Right cardiac atrium (tissue), 5 donors: ENCODE measurements at regions of chr14 and their contacts with region 1.

Region 1: GRCh38 chr14:104563742-104564615 is 15.6 kb upstream of the C14orf180 start:
- DNase-seq: peak; percentile 78 to 91 (median 90)
- ATAC-seq: peak; percentile 75 to 84
- H3K4me3 ChIP-seq: no peak overlapping the region
- H3K27ac ChIP-seq: no peak overlapping the region
- H3K4me1 ChIP-seq: no peaks in the 10 kb centered on the region
- H3K27me3 ChIP-seq: no peaks in the 10 kb centered on the region

Region 2: DNA sequence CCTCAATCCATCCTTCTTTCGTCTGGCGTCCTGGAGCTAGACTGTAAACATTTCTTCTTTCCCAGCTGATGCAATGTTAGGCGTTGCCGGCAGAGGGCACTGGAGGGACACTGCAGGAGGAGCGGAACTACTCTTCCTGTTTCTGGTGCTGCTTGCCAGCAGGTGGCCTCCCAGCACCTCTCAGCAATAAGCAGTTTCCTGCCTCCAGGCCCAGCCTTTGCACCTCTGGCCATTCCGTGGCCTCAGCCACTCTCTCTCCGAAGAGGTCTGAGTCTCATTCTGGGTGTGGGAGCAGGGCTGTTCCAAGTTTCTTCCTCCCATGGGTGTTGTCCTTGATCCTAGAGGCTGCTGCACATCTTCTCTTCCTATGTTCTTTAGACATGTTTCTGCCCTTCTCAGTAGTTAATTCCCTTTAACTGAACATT is 485.9 kb before region 1 on chr14:
- intact Hi-C with region 1: loop called in 3 of 4 experiments (anchors 10 kb)
- DNase-seq: peak; percentile 84 to 92 (median 92)
- ATAC-seq: peak; percentile 86 to 89
- H3K4me3 ChIP-seq: no peak overlapping the region
- H3K27ac ChIP-seq: no peak overlapping the region
- H3K4me1 ChIP-seq: no peaks in the 10 kb centered on the region
- H3K27me3 ChIP-seq: no peaks in the 10 kb centered on the region

Region 3: GRCh38 chr14:104085030-104085888 is 478.7 kb before region 1 on chr14 and contains the start of gene ASPG:
- intact Hi-C with region 1: loop called in 1 of 4 experiments (anchors 10 kb)
- DNase-seq: peak; percentile 75 to 87 (median 84)
- ATAC-seq: peak; percentile 44 to 50
- H3K4me3 ChIP-seq: peak within 1 kb of the TSS; percentile 36
- H3K27ac ChIP-seq: peak within 1 kb of the TSS; percentile 78
- H3K4me1 ChIP-seq: peaks cover 5% of the 10 kb centered on the region
- H3K27me3 ChIP-seq: no peaks in the 10 kb centered on the region
- total RNA-seq, gene ASPG: 169 to 307 (median 208) TPM

Region 4: DNA sequence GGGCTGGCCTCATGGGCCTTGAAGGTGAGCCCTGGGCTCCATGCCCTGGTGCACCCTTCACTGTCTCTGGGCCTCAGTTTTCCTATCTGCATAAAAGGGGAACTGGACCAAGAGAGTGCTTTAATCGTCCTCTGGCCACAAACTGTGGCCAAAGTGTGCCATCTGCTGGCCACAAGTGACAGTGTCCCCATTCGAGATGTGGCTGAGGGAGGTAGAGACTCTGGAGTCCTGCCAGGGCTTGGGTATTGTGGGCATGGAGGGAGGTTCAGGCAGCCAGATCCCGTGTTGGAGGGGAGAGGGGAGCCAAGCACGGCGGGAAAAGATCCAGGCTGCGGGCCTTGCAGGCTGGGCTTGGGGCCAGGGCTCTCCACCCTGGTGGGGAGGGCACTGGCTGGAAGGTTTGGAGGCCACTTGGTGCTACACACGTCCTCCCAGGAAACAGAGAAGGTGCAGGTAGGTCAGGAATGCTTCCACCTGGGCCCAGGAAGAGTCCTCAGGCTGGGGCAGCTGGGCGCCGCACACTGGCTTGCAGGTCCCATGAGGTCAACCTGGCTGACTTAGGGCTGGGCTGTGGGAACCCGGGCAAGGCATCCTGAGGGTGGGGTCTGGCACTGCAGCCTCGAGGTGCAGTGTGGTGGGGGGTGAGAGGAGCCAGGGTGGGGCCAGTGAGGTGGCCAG is 432.9 kb before region 1 on chr14:
- intact Hi-C with region 1: loop called in 3 of 4 experiments (anchors 2 to 5 kb)
- DNase-seq: peak; percentile 62 to 88 (median 86)
- ATAC-seq: peak; percentile 55
- H3K4me3 ChIP-seq: no peak overlapping the region
- H3K27ac ChIP-seq: no peak overlapping the region
- H3K4me1 ChIP-seq: no peaks in the 10 kb centered on the region
- H3K27me3 ChIP-seq: no peaks in the 10 kb centered on the region

Region 5: DNA sequence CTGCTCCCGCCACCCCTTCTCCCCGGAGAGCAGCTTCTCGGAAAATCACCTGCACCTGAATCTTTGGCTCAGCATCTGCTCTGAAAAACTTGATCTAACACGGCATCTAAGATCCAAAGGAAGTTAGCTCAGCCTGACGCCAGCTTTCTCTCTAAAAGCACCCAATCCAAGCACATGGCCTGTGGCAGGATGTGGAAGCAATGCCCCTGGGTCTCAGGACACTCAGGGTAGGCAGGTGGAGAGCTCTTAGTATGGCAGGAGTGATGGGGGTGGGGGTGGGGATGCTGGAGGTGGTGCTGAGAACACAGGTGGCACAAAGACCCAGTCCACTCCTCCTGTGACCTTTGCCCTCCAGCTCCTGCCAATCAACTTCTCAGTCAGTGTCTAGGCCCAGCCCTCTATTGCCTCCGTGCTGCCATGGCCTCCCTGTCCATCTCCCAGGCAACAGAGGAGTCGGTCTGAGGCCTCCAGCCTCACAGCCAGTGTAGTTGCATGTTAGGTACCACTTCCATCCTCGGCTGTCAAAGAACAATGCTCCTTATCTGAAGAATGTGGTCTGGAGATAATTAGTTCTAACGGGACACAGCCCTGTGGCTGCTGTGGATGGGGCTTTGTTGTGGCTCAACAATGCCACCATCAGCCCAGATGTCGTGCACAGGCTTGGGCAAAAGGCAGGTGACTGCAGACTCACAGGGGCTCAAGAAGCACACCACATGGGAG is 164.4 kb before region 1 on chr14:
- intact Hi-C with region 1: no loop called
- DNase-seq: no peak
- ATAC-seq: peak; percentile 36 to 74
- H3K4me3 ChIP-seq: no peak overlapping the region
- H3K27ac ChIP-seq: no peak overlapping the region
- H3K4me1 ChIP-seq: no peaks in the 10 kb centered on the region
- H3K27me3 ChIP-seq: no peaks in the 10 kb centered on the region